Activated CD4-positive, alpha-beta memory T cell treated with anti-CD3 and anti-CD28 coated beads for 36 hours (primary cell): ENCODE measurements at regions of chr15 and their contacts with region 1.

Region 1: DNA sequence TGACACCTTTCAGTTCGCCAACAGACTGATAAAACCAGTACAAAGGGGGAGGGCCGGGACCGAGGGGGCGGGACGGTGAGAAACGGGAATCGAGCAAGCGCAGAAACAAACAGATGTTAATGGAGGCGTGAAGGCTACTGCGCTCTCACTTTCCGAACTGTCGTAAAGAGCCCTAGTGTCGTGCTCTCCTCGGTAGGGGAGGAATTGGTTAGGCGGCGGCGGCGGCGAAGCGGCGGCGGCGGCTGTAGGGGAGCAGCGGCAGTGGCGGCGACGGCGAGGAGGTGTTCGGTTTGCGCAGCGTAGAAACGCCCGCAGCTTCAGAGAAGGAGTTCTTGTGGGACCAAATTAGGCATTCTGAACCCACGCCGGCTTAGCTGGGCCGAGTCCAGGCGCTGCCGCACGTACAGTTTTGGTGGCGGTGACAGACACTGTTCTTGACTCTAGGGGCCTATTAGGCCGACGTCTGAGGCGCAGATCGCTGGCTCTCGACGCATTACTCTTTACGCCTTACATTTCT is at the start of gene RNF111:
- DNase-seq: peak; percentile 94
- H3K4me3 Mint-ChIP-seq: peak within 1 kb of the TSS; percentile 96
- H3K27ac Mint-ChIP-seq: peak within 1 kb of the TSS; percentile 87
- H3K4me1 Mint-ChIP-seq: peaks cover 38% of the 10 kb centered on the region
- H3K27me3 Mint-ChIP-seq: no peaks in the 10 kb centered on the region
- total RNA-seq, gene RNF111: 22.6 to 25.0 TPM

Region 2: DNA sequence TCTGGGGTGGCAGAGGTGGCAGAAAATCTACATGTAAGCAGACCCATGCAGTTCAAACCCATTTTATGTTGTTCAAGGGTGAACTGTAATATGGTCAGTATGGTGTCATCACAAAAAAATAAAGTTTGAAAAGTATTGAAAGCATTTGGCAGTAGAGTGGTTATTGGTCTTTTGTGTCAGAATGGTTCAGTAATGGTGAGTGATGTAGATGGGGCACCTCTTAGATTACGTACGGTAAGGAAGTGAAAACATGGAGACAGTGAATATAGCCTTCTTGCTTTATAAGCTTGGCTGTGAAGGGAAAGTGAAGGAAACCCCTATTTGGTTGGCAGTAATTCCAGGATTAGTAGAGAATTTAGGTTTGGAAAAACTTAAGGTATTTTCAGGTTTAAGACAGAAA is 100.2 kb after region 1 on chr15:
- CTCF ChIA-PET with region 1: no interaction called
- POLR2A ChIA-PET with region 1: no interaction called
- intact Hi-C with region 1: no loop called
- DNase-seq: no peak
- H3K4me3 Mint-ChIP-seq: no peak overlapping the region
- H3K27ac Mint-ChIP-seq: no peak overlapping the region
- H3K4me1 Mint-ChIP-seq: no peaks in the 10 kb centered on the region
- H3K27me3 Mint-ChIP-seq: no peaks in the 10 kb centered on the region

Region 3: GRCh38 chr15:59104912-59105732 is 117.6 kb after region 1 on chr15 and contains the start of gene CCNB2:
- CTCF ChIA-PET with region 1: no interaction called
- POLR2A ChIA-PET with region 1: no interaction called
- intact Hi-C with region 1: loop called (anchors 2 kb)
- DNase-seq: peak; percentile 92
- H3K4me3 Mint-ChIP-seq: peak within 1 kb of the TSS; percentile 92
- H3K27ac Mint-ChIP-seq: peak within 1 kb of the TSS; percentile 88
- H3K4me1 Mint-ChIP-seq: peaks cover 8% of the 10 kb centered on the region
- H3K27me3 Mint-ChIP-seq: no peaks in the 10 kb centered on the region
- total RNA-seq, gene CCNB2: 74.7 to 76.0 TPM

Region 4: GRCh38 chr15:59138243-59138642 is 150.7 kb after region 1 on chr15:
- CTCF ChIA-PET with region 1: no interaction called
- POLR2A ChIA-PET with region 1: no interaction called
- intact Hi-C with region 1: loop called (anchors 2 kb)
- DNase-seq: peak; percentile 72
- H3K4me3 Mint-ChIP-seq: no peak overlapping the region
- H3K27ac Mint-ChIP-seq: no peak overlapping the region
- H3K4me1 Mint-ChIP-seq: peaks cover 24% of the 10 kb centered on the region
- H3K27me3 Mint-ChIP-seq: no peaks in the 10 kb centered on the region